GM18951 (cell line): ENCODE measurements at regions of chr13 and their contacts with region 1.

Region 1: GRCh38 chr13:23888658-23889614 is at the start of gene MIPEP:
- POLR2A ChIP-seq: peak; percentile 65

Region 2: GRCh38 chr13:23466144-23467002 is 422.6 kb before region 1 on chr13:
- in situ Hi-C with region 1: loop called (anchors 25 kb)
- POLR2A ChIP-seq: peak; percentile 15

Region 3: DNA sequence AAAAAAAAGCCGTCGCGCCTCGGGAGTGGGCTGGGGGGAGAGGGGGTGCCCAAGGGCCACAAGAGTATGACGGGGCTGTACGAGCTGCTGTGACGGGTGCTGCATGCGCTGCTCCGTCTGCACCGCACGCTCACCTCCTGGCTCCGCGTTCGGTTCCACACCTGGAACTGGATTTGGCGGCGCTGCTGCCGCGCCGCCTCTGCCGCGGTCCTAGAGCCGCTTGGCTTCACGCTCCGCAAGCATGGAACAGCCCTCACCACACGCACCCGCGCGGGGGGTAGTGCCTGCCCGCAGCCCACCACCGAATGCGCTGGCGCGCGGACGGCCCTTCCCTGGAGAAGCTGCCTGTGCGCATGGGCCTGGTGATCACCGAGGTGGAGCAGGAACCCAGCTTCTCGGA is 439.2 kb after region 1 on chr13:
- in situ Hi-C with region 1: loop called (anchors 5 kb)
- POLR2A ChIP-seq: no peak